Left ventricle myocardium inferior (tissue), 1 donor: ENCODE measurements at regions of chr22 and their contacts with region 1.

Region 1: DNA sequence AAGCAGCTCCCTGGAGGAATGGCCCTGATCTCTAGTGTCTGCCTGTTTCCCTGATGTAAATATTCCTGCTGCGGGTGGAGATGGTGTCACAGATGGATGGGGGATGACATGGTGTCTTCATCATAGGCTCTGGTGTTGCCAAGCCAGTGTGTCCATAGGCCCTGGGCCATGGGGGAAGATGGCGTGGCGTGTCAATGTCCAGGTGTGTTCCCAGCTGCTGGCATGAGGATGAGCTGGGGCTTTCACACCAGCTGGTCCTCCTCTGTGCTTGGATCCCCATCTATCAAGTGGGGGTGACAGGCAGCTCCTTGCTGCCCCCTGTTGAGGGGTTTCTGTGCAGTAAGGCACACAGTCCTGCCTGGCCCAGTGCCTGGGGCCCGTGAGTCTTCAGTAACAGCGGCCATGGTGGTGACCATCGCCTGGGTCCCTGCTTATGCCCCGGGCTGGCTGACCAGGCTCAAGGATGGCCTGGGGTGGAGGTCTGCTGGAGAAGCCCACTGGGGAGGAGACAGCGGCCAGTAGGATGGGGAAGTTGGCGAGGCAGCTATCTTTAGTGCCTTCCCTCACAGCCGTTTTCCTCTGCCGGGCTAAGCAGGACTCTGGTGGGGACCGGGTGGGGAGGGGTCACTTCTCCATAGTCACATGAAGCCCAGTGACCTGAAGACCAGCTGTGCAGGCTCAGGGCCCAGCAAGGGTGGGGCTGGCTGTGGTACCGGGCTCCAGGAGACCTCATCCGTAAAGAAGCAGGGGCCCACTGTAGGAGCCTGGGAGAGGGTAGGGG is 12.7 kb downstream of the RPL3 start:
- DNase-seq: no peak
- H3K4me3 ChIP-seq: no peak overlapping the region
- H3K27ac ChIP-seq: no peak overlapping the region
- H3K4me1 ChIP-seq: peaks cover 53% of the 10 kb centered on the region
- H3K27me3 ChIP-seq: no peaks in the 10 kb centered on the region
- CTCF ChIP-seq: peak; percentile 58

Region 2: GRCh38 chr22:39236321-39237317 is 70.2 kb before region 1 on chr22:
- intact Hi-C with region 1: loop called (anchors 10 kb)
- DNase-seq: peak; percentile 69
- H3K4me3 ChIP-seq: peak overlapping the region; percentile 82
- H3K27ac ChIP-seq: peak overlapping the region; percentile 97
- H3K4me1 ChIP-seq: peaks cover 100% of the 10 kb centered on the region
- H3K27me3 ChIP-seq: no peaks in the 10 kb centered on the region
- CTCF ChIP-seq: no peak